PC-9 (cell line): ENCODE measurements at regions of chr10 and their contacts with region 1.

Region 1: DNA sequence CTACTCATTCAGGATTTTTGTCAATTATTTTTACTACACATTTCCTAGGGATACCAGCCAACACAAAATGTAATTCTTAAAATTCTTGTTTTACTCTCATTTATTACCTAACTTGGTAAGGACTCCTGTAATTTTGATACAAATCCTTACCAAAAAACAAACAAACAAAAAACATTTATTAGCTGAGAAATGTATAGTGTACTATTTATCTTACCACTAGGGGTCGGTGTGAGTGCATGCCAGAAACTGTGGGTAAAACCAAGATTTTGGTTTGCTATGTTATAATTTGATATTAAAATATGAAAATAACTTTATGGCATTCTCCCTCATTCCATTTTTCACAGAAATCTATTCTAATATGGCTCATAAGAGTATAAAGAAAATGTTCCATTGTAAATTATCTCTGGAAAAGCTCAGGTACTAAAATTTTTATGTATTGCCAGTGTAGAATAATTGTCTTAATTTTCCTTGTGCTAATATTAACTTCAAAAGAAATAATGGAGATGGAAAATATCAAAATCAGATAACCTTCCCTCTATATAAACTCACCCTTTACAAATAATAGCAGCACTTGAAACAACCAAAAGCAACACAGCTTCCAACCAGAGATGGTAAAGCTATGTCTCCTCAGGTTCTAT is 290.8 kb upstream of the PCDH15 start:
- DNase-seq: no peak
- H3K4me3 ChIP-seq: no peak overlapping the region
- H3K27ac ChIP-seq: no peak overlapping the region
- H3K4me1 ChIP-seq: no peaks in the 10 kb centered on the region
- H3K27me3 ChIP-seq: no peaks in the 10 kb centered on the region
- CTCF ChIP-seq: peak; percentile 97

Region 2: DNA sequence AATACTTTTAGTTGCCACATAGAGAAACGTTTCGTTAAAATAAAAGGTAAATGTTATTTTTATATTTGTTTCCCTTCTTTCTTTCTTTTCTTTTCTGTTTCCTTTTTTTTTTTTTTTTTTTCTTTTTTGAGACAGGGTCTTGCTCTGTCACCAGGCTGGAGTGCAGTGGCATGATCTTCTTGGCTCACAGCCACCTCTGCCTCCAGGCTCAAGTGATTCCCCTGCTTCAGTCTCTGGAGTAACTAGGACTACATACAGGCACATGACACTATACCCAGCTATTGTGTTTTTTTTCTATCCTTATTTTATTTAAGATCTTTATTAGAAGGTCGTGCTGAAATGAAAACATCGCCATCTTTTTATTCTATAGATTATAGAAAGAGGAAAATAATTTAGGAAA is 1657.4 kb before region 1 on chr10:
- CTCF ChIA-PET with region 1: no interaction called
- POLR2A ChIA-PET with region 1: no interaction called
- intact Hi-C with region 1: no loop called
- DNase-seq: no peak
- H3K4me3 ChIP-seq: no peak overlapping the region
- H3K27ac ChIP-seq: no peak overlapping the region
- H3K4me1 ChIP-seq: no peaks in the 10 kb centered on the region
- H3K27me3 ChIP-seq: no peaks in the 10 kb centered on the region
- CTCF ChIP-seq: no peak

Region 3: DNA sequence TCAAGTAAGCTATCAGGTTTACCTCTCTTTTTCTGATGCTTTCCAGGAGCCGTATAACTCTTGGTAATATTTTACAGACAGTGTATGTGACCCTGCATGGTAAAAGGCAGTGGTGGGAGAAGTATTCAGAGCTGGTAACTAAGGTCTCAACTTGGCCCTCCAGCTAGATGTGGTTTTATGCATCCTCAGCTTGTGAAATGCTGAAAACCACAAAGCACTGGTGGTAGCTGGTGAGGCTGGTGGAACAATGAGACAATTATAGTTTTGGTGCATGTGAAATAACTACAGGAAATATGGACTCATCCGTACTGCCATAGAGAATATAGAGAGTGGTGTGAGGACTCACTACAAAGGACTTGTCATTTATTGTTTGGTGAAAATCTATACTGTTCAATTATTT is 92.2 kb after region 1 on chr10:
- CTCF ChIA-PET with region 1: no interaction called
- POLR2A ChIA-PET with region 1: no interaction called
- intact Hi-C with region 1: no loop called
- DNase-seq: no peak
- H3K4me3 ChIP-seq: no peak overlapping the region
- H3K27ac ChIP-seq: no peak overlapping the region
- H3K4me1 ChIP-seq: no peaks in the 10 kb centered on the region
- H3K27me3 ChIP-seq: no peaks in the 10 kb centered on the region
- CTCF ChIP-seq: no peak

Region 4: GRCh38 chr10:55263327-55263726 is 171.5 kb after region 1 on chr10:
- CTCF ChIA-PET with region 1: interaction called, 6 read pairs
- POLR2A ChIA-PET with region 1: no interaction called
- intact Hi-C with region 1: loop called (anchors 5 kb)
- DNase-seq: no peak
- H3K4me3 ChIP-seq: no peak overlapping the region
- H3K27ac ChIP-seq: no peak overlapping the region
- H3K4me1 ChIP-seq: no peaks in the 10 kb centered on the region
- H3K27me3 ChIP-seq: no peaks in the 10 kb centered on the region
- CTCF ChIP-seq: no peak

Region 5: DNA sequence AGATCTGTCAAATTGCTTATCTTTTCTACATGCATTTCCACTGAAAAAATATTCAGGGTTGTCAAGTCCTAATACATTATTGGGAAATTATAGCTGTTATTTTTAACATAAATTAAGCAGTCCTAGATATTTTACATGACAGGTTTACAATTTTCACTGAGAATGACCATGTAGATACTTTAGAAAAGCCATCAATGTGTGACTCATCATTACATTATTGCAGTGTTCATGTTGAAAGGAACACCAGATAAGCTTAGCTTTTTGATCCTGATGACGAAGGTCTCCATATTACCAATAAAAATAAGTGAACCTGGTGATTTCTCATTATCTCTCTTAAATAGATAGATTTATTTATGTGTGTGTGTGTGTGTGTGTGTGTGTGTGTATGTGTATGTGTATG is 238.7 kb after region 1 on chr10:
- CTCF ChIA-PET with region 1: no interaction called
- POLR2A ChIA-PET with region 1: no interaction called
- intact Hi-C with region 1: no loop called
- DNase-seq: no peak
- H3K4me3 ChIP-seq: no peak overlapping the region
- H3K27ac ChIP-seq: no peak overlapping the region
- H3K4me1 ChIP-seq: no peaks in the 10 kb centered on the region
- H3K27me3 ChIP-seq: no peaks in the 10 kb centered on the region
- CTCF ChIP-seq: no peak

Region 6: DNA sequence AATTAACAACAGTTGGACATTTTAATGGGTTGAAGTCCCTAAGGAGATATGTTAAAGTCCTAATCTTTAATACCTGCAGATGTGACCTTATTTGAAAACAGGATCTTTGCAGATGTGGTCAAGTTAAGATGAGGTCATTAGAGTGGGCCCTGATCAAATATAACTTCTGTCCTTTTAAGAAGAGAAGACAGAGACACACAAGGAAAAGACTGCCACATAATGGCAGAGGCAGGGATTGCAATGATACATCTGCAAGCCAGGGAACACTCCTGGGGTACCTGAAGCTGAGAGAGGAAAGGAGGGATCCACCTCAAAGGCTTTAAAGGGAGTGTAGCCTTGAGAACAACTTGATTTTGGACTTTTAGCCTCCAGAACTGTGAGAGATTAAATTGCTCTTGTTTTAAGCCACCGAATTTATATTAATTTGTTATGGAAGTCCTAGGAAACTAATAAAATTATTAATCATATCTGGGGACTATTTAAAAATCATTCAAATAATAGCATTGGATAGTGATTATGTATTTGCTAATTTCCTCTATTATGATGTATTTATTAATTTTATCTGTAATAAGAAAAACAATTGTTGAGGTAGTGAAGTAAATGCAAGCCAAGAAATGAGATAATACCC is 409.2 kb after region 1 on chr10:
- CTCF ChIA-PET with region 1: no interaction called
- POLR2A ChIA-PET with region 1: no interaction called
- intact Hi-C with region 1: loop called (anchors 1 kb)
- DNase-seq: peak in 1 of 2 experiments; percentile 24
- H3K4me3 ChIP-seq: no peak overlapping the region
- H3K27ac ChIP-seq: no peak overlapping the region
- H3K4me1 ChIP-seq: no peaks in the 10 kb centered on the region
- H3K27me3 ChIP-seq: no peaks in the 10 kb centered on the region
- CTCF ChIP-seq: peak; percentile 75

Region 7: GRCh38 chr10:55734112-55734511 is 642.3 kb after region 1 on chr10:
- CTCF ChIA-PET with region 1: no interaction called
- POLR2A ChIA-PET with region 1: no interaction called
- intact Hi-C with region 1: loop called (anchors 10 kb)
- DNase-seq: no peak
- H3K4me3 ChIP-seq: no peak overlapping the region
- H3K27ac ChIP-seq: no peak overlapping the region
- H3K4me1 ChIP-seq: no peaks in the 10 kb centered on the region
- H3K27me3 ChIP-seq: no peaks in the 10 kb centered on the region
- CTCF ChIP-seq: no peak